ENCODE measurements at regions of chr3 and their contacts with region 1.

Region 1: GRCh38 chr3:171772427-171773056 is 37.7 kb downstream of the PLD1 start:
- DNase-seq: peak; percentile 82
- H3K4me3 ChIP-seq: no peak overlapping the region
- H3K27ac ChIP-seq: no peak overlapping the region
- H3K4me1 ChIP-seq: peaks cover 26% of the 10 kb centered on the region
- H3K27me3 ChIP-seq: no peaks in the 10 kb centered on the region
- CTCF ChIP-seq: peak; percentile 62 to 69
- POLR2A ChIP-seq: no peak

Region 2: GRCh38 chr3:171614318-171614921 is 158.1 kb before region 1 on chr3:
- CTCF ChIA-PET with region 1: interaction called, 29 read pairs
- POLR2A ChIA-PET with region 1: no interaction called
- dilution Hi-C with region 1: no loop called
- intact Hi-C with region 1: loop called (anchors 1 kb)
- DNase-seq: peak; percentile 37
- H3K4me3 ChIP-seq: no peak overlapping the region
- H3K27ac ChIP-seq: no peak overlapping the region
- H3K4me1 ChIP-seq: no peaks in the 10 kb centered on the region
- H3K27me3 ChIP-seq: no peaks in the 10 kb centered on the region
- CTCF ChIP-seq: peak; percentile 35 to 55
- POLR2A ChIP-seq: no peak

Region 3: GRCh38 chr3:171654809-171655208 is 117.7 kb before region 1 on chr3:
- CTCF ChIA-PET with region 1: interaction called, 17 read pairs
- POLR2A ChIA-PET with region 1: no interaction called
- dilution Hi-C with region 1: no loop called
- intact Hi-C with region 1: no loop called
- DNase-seq: peak; percentile 78
- H3K4me3 ChIP-seq: no peak overlapping the region
- H3K27ac ChIP-seq: no peak overlapping the region
- H3K4me1 ChIP-seq: no peaks in the 10 kb centered on the region
- H3K27me3 ChIP-seq: no peaks in the 10 kb centered on the region
- CTCF ChIP-seq: no peak
- POLR2A ChIP-seq: no peak

Region 4: DNA sequence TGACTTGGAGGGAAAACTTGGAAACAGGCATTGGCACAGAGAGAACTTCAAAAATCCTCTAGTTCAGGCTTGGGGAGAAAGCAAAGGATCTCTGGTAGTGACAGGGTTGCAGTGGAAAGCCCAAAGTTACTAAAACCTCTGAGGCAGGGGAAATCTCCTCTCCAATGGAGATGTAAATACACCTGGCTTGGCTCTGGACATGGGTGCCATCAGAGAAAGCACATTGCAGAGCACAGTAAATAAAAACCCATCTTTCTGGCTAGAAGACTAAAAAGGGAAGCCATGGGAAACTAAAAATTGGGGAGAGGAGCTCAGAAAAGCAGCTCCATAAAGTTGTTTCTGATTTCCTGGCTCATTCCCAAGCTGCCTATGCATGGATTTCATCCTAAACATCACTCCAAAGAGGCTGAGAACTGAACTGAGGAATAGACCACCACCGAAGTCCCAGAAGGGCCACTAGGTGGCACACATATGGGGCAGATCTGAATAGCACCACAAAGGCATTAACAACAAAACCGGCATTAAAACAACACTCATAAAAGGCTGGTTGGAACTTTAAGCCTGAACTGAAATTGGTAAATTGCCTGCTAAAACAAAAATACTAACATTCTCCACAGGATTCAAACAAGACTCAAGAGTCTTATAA is 68.7 kb before region 1 on chr3:
- CTCF ChIA-PET with region 1: interaction called, 60 read pairs
- POLR2A ChIA-PET with region 1: no interaction called
- dilution Hi-C with region 1: no loop called
- intact Hi-C with region 1: loop called (anchors 1 kb)
- DNase-seq: peak; percentile 45
- H3K4me3 ChIP-seq: no peak overlapping the region
- H3K27ac ChIP-seq: no peak overlapping the region
- H3K4me1 ChIP-seq: no peaks in the 10 kb centered on the region
- H3K27me3 ChIP-seq: no peaks in the 10 kb centered on the region
- CTCF ChIP-seq: peak; percentile 59 to 69
- POLR2A ChIP-seq: no peak

Region 5: GRCh38 chr3:171757361-171758034 is 15.0 kb before region 1 on chr3:
- CTCF ChIA-PET with region 1: interaction called, 40 read pairs
- POLR2A ChIA-PET with region 1: no interaction called
- dilution Hi-C with region 1: no loop called
- intact Hi-C with region 1: no loop called
- DNase-seq: peak; percentile 58
- H3K4me3 ChIP-seq: peak overlapping the region in 1 of 3 experiments; percentile 40
- H3K27ac ChIP-seq: peak overlapping the region; percentile 24
- H3K4me1 ChIP-seq: peaks cover 19% of the 10 kb centered on the region
- H3K27me3 ChIP-seq: no peaks in the 10 kb centered on the region
- CTCF ChIP-seq: no peak
- POLR2A ChIP-seq: no peak

Region 6: DNA sequence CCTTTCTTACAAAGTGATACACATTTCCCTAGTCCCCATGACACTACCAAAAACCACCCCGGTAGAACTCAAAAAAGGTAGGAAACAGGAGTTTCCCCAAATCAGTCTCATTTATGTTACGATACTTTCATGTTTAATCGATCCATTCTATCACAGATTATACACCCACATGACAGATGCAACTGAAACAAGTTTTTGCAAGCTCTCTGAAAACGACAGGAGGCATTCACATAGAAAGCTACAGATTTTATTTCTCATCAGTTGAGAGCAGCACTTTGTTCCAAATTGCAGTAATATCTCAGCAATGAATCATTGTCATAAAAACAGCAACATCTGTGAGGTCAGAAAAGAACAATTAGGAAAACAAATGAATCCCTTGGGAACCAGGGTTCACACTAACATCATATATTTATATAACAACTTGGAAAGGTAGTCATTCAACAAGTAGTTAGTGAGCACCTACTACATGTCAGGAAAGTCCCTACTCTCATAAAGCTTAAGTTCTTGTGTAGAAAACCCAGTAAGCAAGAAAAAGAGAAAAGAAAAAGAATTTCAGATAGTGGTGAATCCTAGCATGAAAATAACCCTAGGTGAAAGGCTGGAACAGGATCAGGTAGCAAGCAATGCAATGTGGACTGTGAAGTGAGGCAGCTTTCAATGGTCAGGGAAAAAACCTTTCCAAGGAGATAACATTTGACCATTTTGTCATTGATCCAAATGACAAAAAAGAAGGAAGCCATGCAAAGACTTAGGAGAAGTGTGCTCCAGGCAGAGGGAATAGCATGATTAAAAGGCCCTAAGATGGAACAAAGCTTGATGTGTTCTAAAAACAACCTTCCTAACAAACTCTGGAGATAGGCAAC is 29.4 kb after region 1 on chr3:
- CTCF ChIA-PET with region 1: interaction called, 11 read pairs
- POLR2A ChIA-PET with region 1: interaction called, 3 read pairs
- dilution Hi-C with region 1: no loop called
- intact Hi-C with region 1: no loop called
- DNase-seq: peak; percentile 97
- H3K4me3 ChIP-seq: no peak overlapping the region
- H3K27ac ChIP-seq: peak overlapping the region; percentile 97
- H3K4me1 ChIP-seq: peaks cover 86% of the 10 kb centered on the region
- H3K27me3 ChIP-seq: no peaks in the 10 kb centered on the region
- CTCF ChIP-seq: no peak
- POLR2A ChIP-seq: peak; percentile 40

Region 7: DNA sequence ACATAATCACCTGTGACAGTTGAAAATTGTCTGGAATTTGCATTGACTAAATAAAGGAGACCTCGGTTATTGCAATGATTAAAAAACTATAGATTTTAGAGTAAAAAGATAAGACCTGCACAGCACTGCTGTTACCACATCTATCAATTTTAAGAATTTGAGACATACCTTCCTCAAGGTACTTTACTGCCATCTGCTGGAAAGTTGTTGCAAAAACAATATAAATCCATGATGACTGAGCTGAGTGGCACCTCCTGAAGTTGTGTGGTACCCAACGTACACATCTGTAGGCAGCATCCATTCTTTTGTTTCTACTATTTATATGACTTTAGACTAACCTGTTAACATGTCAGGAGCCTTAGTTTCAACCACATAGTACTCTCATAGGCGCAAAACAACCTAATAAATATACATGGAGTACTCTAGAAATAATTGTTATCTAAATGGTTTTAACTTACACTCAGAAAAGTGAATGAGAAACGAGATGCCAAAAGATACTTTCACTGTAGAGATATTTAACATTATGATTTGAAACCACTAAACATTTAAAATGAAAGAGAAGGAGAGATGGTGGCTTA is 569.0 kb after region 1 on chr3:
- CTCF ChIA-PET with region 1: interaction called, 11 read pairs
- POLR2A ChIA-PET with region 1: no interaction called
- dilution Hi-C with region 1: no loop called
- intact Hi-C with region 1: no loop called
- DNase-seq: peak; percentile 63
- H3K4me3 ChIP-seq: no peak overlapping the region
- H3K27ac ChIP-seq: no peak overlapping the region
- H3K4me1 ChIP-seq: no peaks in the 10 kb centered on the region
- H3K27me3 ChIP-seq: no peaks in the 10 kb centered on the region
- CTCF ChIP-seq: peak; percentile 28 to 34
- POLR2A ChIP-seq: no peak

Measured in endothelial cell of umbilical vein (primary cell).